Panc1 (cell line): ENCODE measurements at regions of chr15 and their contacts with region 1.

Region 1: DNA sequence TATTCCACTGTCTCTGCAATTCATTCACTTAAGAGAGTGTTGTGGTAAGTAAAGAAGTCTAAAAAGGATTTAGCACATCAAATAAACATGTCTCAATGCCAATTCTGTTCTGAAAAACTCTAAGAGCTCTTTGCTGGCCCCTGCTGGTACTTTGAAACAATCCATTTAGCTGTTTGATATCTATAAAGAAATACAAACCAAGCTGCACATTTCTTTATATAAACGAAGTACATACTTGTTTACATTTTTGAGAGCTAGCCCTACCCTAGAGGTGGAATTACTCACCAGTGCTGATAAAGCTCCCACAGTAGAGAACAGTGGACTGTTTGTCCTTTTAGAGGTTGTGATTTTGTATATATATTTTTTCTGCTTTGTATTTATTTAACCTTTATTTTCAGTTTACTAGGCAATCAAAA is 75.5 kb downstream of the NEDD4 start:
- DNase-seq: peak; percentile 86
- ATAC-seq: peak; percentile 98
- H3K4me3 ChIP-seq: no peak overlapping the region
- H3K27ac ChIP-seq: peak overlapping the region; percentile 76
- H3K4me1 ChIP-seq: peaks cover 24% of the 10 kb centered on the region
- H3K27me3 ChIP-seq: no peaks in the 10 kb centered on the region
- CTCF ChIP-seq: peak; percentile 78; the same call in 1 of the 2 replicates

Region 2: GRCh38 chr15:55742927-55743728 is 174.8 kb before region 1 on chr15 and contains the start of gene PRTG:
- CTCF ChIA-PET with region 1: interaction called, 10 read pairs
- POLR2A ChIA-PET with region 1: no interaction called
- in situ Hi-C with region 1: no loop called
- intact Hi-C with region 1: no loop called
- DNase-seq: no peak
- ATAC-seq: peak; percentile 98
- H3K4me3 ChIP-seq: peak within 1 kb of the TSS; percentile 64 to 89
- H3K27ac ChIP-seq: peak within 1 kb of the TSS; percentile 82
- H3K4me1 ChIP-seq: peaks cover 13% of the 10 kb centered on the region
- H3K27me3 ChIP-seq: no peaks in the 10 kb centered on the region
- CTCF ChIP-seq: no peak
- total RNA-seq, gene PRTG: 11.4 TPM

Region 3: DNA sequence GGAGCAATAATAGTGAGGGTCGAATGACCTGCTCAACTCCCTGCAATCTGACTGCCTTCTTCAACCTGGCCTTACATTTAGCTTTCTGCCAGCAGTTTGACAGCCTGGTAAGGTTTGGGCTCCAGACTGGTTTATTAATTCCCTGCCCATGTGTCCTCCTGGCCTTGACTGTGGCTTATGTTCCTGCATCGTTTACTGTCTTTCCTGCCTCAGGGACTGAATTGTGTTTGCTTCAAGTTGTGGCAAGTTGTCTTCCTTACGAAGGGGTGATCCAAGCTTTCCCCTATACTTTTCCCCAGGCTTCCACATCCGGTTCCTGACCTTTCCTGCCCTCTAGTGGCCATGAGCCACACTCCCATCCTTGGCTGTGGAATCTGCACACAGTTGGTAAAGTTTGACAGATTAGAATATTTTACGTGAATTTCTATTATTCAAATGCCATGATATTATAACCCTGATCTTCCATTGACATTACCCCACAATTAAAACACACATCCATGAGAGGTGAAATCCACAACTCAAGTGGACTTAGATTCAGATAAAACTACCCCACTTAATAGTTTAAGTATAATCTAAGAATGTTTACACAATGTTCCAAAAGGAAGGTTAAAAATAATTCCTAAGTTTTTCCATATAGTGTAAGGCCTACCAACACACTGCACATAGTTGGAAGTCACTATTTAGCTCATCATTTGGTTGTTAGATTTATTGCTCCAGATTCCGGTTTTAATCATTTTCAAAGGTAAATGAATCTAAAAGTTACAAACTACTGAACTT is 20.1 kb before region 1 on chr15:
- CTCF ChIA-PET with region 1: interaction called, 13 read pairs
- POLR2A ChIA-PET with region 1: interaction called, 5 read pairs
- in situ Hi-C with region 1: no loop called
- intact Hi-C with region 1: no loop called
- DNase-seq: peak; percentile 64
- ATAC-seq: peak; percentile 93
- H3K4me3 ChIP-seq: peak overlapping the region in 1 of 2 experiments; percentile 12; a peak in 1 of 4 replicates
- H3K27ac ChIP-seq: peak overlapping the region; percentile 3
- H3K4me1 ChIP-seq: peaks cover 16% of the 10 kb centered on the region
- H3K27me3 ChIP-seq: no peaks in the 10 kb centered on the region
- CTCF ChIP-seq: peak; percentile 92

Region 4: GRCh38 chr15:56365075-56365711 is 447.3 kb after region 1 on chr15 and contains the start of gene TEX9:
- CTCF ChIA-PET with region 1: no interaction called
- POLR2A ChIA-PET with region 1: no interaction called
- in situ Hi-C with region 1: no loop called
- intact Hi-C with region 1: no loop called
- DNase-seq: peak; percentile 48
- ATAC-seq: peak; percentile 100
- H3K4me3 ChIP-seq: peak within 1 kb of the TSS; percentile 51 to 77
- H3K27ac ChIP-seq: peak within 1 kb of the TSS; percentile 70
- H3K4me1 ChIP-seq: peaks cover 6% of the 10 kb centered on the region; the same call in 1 of the 2 replicates
- H3K27me3 ChIP-seq: peaks cover 4% of the 10 kb centered on the region; the same call in 1 of the 2 replicates
- CTCF ChIP-seq: no peak
- total RNA-seq, gene TEX9: 4.1 TPM